ENCODE measurements at regions of chr13 and their contacts with region 1.

Region 1: GRCh38 chr13:50801087-50801931 is 42.2 kb downstream of the DLEU7 start:
- DNase-seq: peak; percentile 27
- ATAC-seq: peak; percentile 97
- H3K4me3 ChIP-seq: no peak overlapping the region
- H3K27ac ChIP-seq: no peak overlapping the region
- H3K4me1 ChIP-seq: no peaks in the 10 kb centered on the region
- H3K27me3 ChIP-seq: no peaks in the 10 kb centered on the region
- CTCF ChIP-seq: peak; percentile 38 to 64 (median 59); a peak in 5 of 6 replicates
- POLR2A ChIP-seq: no peak
- RAD21 ChIP-seq: peak; percentile 79

Region 2: DNA sequence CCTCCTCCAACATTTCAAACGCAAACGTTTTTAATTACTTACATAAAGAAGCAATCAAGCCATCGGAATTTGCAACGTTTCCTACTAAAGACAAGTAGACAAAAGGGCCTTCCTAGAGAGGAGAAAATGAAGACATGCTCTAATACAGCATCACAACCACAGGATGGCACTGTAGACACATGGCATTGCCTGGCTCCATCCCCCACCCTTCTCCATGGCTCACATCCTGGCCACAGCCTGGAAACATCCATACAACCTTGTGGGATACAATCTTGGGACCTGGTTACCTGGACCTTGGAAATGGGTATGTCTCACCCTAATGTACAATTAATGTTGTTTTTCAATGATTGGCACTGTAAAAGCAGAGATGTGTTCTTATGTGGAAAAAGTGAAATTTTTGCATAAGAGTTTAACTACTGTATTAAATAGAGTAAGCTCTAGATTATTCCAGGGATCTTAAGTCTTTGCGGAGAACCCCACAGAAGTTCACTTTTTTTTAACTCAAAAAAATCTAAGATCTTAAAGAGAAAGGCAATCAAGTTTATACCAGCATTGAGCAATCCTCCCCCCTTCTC is 1131.5 kb before region 1 on chr13:
- CTCF ChIA-PET with region 1: no interaction called
- POLR2A ChIA-PET with region 1: no interaction called
- RAD21 ChIA-PET with region 1: no interaction called
- intact Hi-C with region 1: loop called (anchors 10 kb)
- DNase-seq: peak; percentile 63
- ATAC-seq: peak; percentile 99
- H3K4me3 ChIP-seq: no peak overlapping the region
- H3K27ac ChIP-seq: no peak overlapping the region
- H3K4me1 ChIP-seq: peaks cover 0 to 11% of the 10 kb centered on the region in 2 experiments; a peak in 2 of 4 replicates
- H3K27me3 ChIP-seq: no peaks in the 10 kb centered on the region
- CTCF ChIP-seq: peak; percentile 74 to 92 (median 81)
- POLR2A ChIP-seq: no peak
- RAD21 ChIP-seq: peak; percentile 94

Region 3: GRCh38 chr13:51542346-51543242 is 741.3 kb after region 1 on chr13:
- CTCF ChIA-PET with region 1: no interaction called
- POLR2A ChIA-PET with region 1: no interaction called
- RAD21 ChIA-PET with region 1: no interaction called
- intact Hi-C with region 1: no loop called
- DNase-seq: no peak
- ATAC-seq: no peak
- H3K4me3 ChIP-seq: no peak overlapping the region
- H3K27ac ChIP-seq: no peak overlapping the region
- H3K4me1 ChIP-seq: no peaks in the 10 kb centered on the region
- H3K27me3 ChIP-seq: no peaks in the 10 kb centered on the region
- CTCF ChIP-seq: no peak
- POLR2A ChIP-seq: no peak
- RAD21 ChIP-seq: no peak